Activated B cell treated with CpG ODN at 0.5 μM for 24 hours (primary cell): ENCODE measurements at regions of chr11 and their contacts with region 1.

Region 1: GRCh38 chr11:66001942-66002647 is at the starts of genes BANF1 and EIF1AD:
- DNase-seq: peak; percentile 86
- ATAC-seq: peak; percentile 82
- H3K4me3 Mint-ChIP-seq: peak within 1 kb of the TSS; percentile 100
- H3K27ac Mint-ChIP-seq: peak within 1 kb of the TSS; percentile 98
- H3K4me1 Mint-ChIP-seq: peaks cover 36% of the 10 kb centered on the region
- H3K27me3 Mint-ChIP-seq: no peaks in the 10 kb centered on the region
- CTCF ChIP-seq: no peak
- total RNA-seq, gene BANF1: 220 and 228 TPM in 2 replicates
- total RNA-seq, gene EIF1AD: 50.7 and 58.9 TPM in 2 replicates

Region 2: GRCh38 chr11:65662799-65663638 is 339.1 kb before region 1 on chr11 and contains the start of gene RELA:
- CTCF ChIA-PET with region 1: no interaction called
- POLR2A ChIA-PET with region 1: interaction called, 3 read pairs
- intact Hi-C with region 1: loop called (anchors 5 kb)
- DNase-seq: peak; percentile 91
- ATAC-seq: peak; percentile 87
- H3K4me3 Mint-ChIP-seq: peak within 1 kb of the TSS; percentile 87
- H3K27ac Mint-ChIP-seq: peak within 1 kb of the TSS; percentile 93
- H3K4me1 Mint-ChIP-seq: peaks cover 35% of the 10 kb centered on the region
- H3K27me3 Mint-ChIP-seq: no peaks in the 10 kb centered on the region
- CTCF ChIP-seq: no peak
- total RNA-seq, gene RELA: 110 and 119 TPM in 2 replicates

Region 3: GRCh38 chr11:65919146-65920033 is 82.7 kb before region 1 on chr11 and contains the start of gene DRAP1:
- CTCF ChIA-PET with region 1: no interaction called
- POLR2A ChIA-PET with region 1: no interaction called
- intact Hi-C with region 1: loop called (anchors 1 kb)
- DNase-seq: peak; percentile 95
- ATAC-seq: peak; percentile 87
- H3K4me3 Mint-ChIP-seq: peak within 1 kb of the TSS; percentile 93
- H3K27ac Mint-ChIP-seq: peak within 1 kb of the TSS; percentile 81
- H3K4me1 Mint-ChIP-seq: peaks cover 53% of the 10 kb centered on the region
- H3K27me3 Mint-ChIP-seq: no peaks in the 10 kb centered on the region
- CTCF ChIP-seq: no peak
- total RNA-seq, gene DRAP1: 64.7 and 75.8 TPM in 2 replicates

Region 4: DNA sequence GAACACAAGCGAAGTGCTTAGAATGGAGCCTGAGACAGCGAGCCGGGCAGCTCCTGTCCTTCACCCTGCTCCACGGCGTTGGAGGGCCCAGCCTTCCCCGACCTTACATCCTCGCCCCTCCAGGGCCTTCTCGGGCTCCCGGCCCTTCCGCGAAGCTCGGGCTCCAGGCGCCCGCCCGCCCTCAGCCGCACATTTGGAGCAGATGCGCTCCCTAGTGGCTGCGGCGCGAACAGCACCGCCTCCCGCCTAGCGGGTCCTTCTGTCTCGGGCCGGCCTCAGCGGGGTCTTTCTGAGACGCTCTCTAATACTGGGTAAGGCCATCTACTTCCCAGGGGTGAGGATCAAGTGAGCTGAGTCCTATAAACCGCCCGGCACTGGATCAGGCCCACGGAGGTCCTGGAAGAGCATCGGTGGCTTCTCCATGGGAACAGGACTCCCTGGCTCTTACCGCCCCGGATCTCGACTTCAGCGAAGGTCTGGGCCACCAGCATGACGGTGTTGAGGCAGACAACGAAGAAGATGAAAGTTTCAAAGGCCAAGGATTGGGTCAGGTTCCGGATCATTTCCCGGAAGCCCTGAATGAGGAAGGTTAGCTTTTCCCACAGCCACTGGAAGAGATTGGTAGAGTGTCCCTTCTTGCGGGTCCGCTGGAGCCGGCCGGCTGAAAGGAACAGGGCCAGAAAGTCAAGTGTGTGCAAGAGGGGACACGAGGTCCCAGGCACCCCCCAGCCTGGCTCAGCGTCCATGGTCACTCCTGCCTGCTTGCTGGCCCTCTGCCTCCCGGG is 20.5 kb after region 1 on chr11:
- CTCF ChIA-PET with region 1: interaction called, 13 read pairs
- POLR2A ChIA-PET with region 1: interaction called, 5 read pairs
- intact Hi-C with region 1: loop called (anchors 1 kb)
- DNase-seq: peak; percentile 82
- ATAC-seq: peak; percentile 98
- H3K4me3 Mint-ChIP-seq: peak overlapping the region; percentile 24
- H3K27ac Mint-ChIP-seq: no peak overlapping the region
- H3K4me1 Mint-ChIP-seq: peaks cover 4% of the 10 kb centered on the region
- H3K27me3 Mint-ChIP-seq: peaks cover 8% of the 10 kb centered on the region
- CTCF ChIP-seq: peak; percentile 25

Region 5: GRCh38 chr11:66051766-66052663 is 49.9 kb after region 1 on chr11 and contains the start of gene SF3B2:
- CTCF ChIA-PET with region 1: no interaction called
- POLR2A ChIA-PET with region 1: interaction called, 16 read pairs
- intact Hi-C with region 1: loop called (anchors 1 kb)
- DNase-seq: peak; percentile 91
- ATAC-seq: peak; percentile 97
- H3K4me3 Mint-ChIP-seq: peak within 1 kb of the TSS; percentile 99
- H3K27ac Mint-ChIP-seq: peak within 1 kb of the TSS; percentile 96
- H3K4me1 Mint-ChIP-seq: peaks cover 27% of the 10 kb centered on the region
- H3K27me3 Mint-ChIP-seq: peaks cover 8% of the 10 kb centered on the region
- CTCF ChIP-seq: no peak
- total RNA-seq, gene SF3B2: 198 and 219 TPM in 2 replicates

Region 6: DNA sequence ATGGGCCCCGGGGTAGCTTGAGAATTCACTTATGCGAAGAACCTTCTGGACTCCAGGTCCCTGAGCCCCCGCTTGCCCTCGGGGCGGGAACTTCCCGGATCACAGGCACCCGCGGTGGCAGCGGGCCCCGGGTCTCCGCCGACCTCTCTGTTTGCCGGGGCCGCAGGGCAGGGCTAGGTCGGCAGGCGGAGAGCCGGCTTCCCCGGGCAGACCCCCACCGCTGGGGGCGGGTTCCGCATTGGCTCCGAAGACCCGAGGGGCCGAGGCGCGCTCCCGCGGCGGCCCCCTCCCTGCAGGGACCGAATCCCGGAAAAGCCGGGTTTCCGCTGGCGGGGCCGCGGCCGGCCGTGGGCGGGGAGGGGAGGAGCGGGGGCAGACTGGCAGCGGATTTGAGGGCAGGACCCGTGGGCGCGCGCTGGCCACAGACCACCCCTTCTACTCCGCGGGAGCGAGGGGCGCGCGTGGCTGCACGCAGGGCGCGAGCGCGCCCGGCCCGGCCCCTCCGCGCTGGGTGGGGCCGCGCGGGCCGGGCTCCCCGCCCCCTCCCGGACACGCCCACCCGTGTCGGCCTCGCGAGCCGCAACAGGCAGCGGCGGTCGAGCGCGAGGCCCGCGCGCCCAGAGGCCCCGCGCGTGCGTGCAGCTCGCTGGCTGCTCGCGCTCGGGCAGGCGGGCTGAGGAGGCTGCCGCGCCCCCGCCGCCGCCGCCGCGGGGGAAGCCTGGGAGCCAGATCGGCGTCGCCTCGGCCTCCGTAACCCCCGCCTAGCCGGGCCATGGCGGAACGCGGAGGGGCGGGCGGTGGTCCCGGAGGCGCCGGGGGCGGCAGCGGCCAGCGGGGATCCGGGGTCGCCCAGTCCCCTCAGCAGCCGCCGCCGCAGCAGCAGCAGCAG is 67.9 kb after region 1 on chr11 and contains the start of gene PACS1:
- CTCF ChIA-PET with region 1: no interaction called
- POLR2A ChIA-PET with region 1: no interaction called
- intact Hi-C with region 1: no loop called
- DNase-seq: peak; percentile 82
- ATAC-seq: peak; percentile 75
- H3K4me3 Mint-ChIP-seq: peak within 1 kb of the TSS; percentile 92
- H3K27ac Mint-ChIP-seq: peak within 1 kb of the TSS; percentile 95
- H3K4me1 Mint-ChIP-seq: peaks cover 66% of the 10 kb centered on the region
- H3K27me3 Mint-ChIP-seq: no peaks in the 10 kb centered on the region
- CTCF ChIP-seq: no peak
- total RNA-seq, gene PACS1: 118 and 121 TPM in 2 replicates